Heart right ventricle (tissue), 16 donors: ENCODE measurements at regions of chr3 and their contacts with region 1.

Region 1: DNA sequence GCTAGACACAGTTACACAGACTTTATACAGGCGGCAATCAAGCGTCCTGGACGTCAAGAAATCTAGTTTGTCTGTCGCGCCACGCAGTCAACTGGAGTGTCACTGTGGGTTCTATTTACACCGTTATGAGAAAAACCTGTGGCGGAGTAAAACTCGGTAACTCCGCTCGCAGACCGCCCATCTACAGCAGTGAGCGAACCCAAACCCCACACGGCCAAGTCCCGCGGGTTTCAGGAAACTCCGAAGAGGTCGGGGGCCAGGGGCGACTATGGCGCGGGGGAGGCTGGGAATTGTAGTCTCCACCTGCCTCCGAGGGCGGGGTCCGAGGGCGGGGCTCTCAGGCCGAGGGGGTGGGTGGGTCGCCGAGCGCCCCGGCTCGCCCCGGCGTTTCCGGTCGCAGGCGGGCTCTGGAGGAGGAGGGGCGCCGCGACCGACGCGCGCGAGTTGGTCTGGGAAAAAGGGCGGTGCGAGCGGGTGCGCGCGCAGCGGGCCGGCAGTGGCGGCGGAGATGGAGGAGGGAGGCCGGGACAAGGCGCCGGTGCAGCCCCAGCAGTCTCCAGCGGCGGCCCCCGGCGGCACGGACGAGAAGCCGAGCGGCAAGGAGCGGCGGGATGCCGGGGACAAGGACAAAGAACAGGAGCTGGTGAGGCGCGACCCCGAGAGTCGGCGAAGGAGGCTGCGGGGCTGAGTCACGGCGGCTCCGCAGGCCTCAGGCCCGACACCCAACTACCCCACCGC is at the start of gene PSMD2:
- DNase-seq: peak; percentile 98
- ATAC-seq: peak; percentile 99 to 100 (median 99)
- H3K4me3 ChIP-seq: peak within 1 kb of the TSS; percentile 67 to 100 (median 92)
- H3K27ac ChIP-seq: peak within 1 kb of the TSS; percentile 46 to 93 (median 83)
- H3K4me1 ChIP-seq: peaks cover 5 to 24% (median 16%) of the 10 kb centered on the region in 9 donors
- H3K27me3 ChIP-seq: no peaks in the 10 kb centered on the region
- CTCF ChIP-seq: no peak
- total RNA-seq, gene PSMD2: 210 to 254 (median 231) TPM

Region 2: DNA sequence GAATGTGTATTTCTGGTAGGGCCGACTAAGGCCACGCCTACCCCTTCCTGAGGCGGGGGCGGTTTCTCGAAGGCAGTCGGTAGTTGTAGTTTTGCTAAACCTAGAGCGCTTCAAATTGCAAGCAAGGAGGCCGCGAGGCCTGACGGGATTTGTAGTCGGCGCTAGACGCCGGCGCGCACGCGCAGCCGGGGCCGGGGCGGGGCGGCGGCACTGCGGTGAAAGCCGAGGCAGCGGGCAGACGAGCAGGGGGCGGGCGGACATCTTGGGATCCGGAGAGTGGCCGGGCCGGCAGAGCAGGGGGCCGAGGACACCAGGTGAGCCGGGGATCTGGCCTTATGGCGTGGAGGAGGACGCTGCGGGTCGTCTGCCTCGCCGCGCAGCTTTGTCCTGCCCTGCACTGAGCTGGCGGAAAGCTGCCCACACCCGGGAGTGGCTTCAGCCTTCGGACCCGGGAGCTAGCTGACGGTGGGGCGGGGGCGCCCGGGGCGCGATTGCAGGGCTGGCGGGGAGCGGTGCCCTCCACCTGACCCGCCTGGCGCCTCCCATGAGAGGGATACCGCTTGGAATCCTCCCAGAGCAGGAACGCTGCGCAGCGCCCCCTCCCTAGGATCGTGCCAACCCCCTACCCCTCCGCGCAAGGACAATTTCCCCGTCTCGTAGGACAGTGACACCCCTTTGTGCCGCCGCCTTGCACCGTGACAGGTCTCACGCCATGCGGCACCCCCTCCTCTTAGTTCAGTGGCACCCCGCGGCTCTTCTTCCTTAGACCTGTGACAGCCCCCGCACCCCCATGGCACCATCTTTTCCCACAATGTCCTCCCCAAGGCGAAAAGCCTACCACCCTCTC is 124.1 kb before region 1 on chr3 and contains the start of gene AP2M1:
- intact Hi-C with region 1: loop called in 1 of 10 experiments (anchors 5 kb)
- DNase-seq: peak; percentile 98
- ATAC-seq: peak; percentile 92 to 96 (median 94)
- H3K4me3 ChIP-seq: peak within 1 kb of the TSS; percentile 86 to 100 (median 94)
- H3K27ac ChIP-seq: peak within 1 kb of the TSS; percentile 87 to 99 (median 98)
- H3K4me1 ChIP-seq: peaks cover 10 to 60% (median 42%) of the 10 kb centered on the region in 9 donors
- H3K27me3 ChIP-seq: no peaks in the 10 kb centered on the region
- CTCF ChIP-seq: peak in 1 of 9 donors; percentile 11
- total RNA-seq, gene AP2M1: 263 to 371 (median 321) TPM

Region 3: GRCh38 chr3:184335661-184336546 is 37.0 kb after region 1 on chr3:
- intact Hi-C with region 1: loop called in 1 of 10 experiments (anchors 2 kb)
- DNase-seq: peak; percentile 88 to 91
- ATAC-seq: peak; percentile 63 to 75 (median 68)
- H3K4me3 ChIP-seq: peak overlapping the region; percentile 51 to 96 (median 82)
- H3K27ac ChIP-seq: peak overlapping the region; percentile 81 to 99 (median 96)
- H3K4me1 ChIP-seq: peaks cover 18 to 65% (median 45%) of the 10 kb centered on the region in 9 donors
- H3K27me3 ChIP-seq: no peaks in the 10 kb centered on the region
- CTCF ChIP-seq: no peak